ENCODE measurements at regions of chr3 and their contacts with region 1.

Region 1: GRCh38 chr3:122679085-122679881 is 1.4 kb upstream of the PARP14 start:
- DNase-seq: peak; percentile 87
- ATAC-seq: peak; percentile 74 to 83

Region 2: DNA sequence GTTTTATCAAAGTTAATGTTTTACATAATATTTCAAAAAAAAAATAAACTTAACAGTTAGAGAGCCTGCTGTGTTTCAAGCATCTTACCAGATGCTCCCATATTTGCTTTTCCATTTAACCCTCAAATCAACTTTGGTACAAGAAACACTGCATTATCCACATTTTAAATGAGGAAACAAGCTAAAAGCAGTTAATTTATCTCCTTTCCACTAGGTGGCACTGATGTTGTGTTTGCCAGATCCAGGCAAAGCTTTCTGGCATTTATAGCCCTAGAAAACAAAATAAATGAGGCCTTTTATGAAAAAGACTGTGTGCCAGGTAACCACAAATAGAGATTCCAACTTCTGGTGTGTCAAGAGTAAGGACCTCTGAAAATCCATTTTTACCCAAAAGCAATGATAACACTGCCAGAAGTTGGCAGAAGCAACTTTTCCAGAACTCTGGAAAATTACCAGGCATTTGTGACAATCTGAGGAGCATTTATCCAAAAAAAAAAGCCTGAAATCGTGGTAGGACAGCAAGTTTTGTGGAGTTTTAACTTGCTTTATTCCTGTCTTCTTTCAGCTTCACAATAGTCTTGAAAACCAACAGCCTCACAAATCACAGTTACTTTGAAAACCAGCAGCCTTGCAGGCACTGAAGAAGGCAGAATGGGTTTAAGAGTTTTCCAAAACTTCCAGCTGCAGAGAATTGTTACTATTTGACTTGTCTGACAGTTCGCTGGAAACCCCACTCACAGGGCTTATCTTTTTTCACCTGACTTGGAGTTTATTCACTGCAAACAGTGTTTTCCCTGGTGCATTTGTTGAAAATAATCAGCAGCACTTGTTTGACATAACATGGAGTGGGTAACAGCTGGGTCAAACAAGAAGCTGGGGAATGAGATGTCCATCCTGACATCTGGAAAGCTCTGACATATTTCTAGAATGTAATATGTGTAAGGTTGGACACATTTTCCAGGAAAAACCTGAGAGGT is 286.1 kb before region 1 on chr3:
- intact Hi-C with region 1: loop called in 1 of 2 experiments (anchors 5 kb)
- DNase-seq: no peak
- ATAC-seq: peak in 1 of 2 donors; percentile 54

Region 3: DNA sequence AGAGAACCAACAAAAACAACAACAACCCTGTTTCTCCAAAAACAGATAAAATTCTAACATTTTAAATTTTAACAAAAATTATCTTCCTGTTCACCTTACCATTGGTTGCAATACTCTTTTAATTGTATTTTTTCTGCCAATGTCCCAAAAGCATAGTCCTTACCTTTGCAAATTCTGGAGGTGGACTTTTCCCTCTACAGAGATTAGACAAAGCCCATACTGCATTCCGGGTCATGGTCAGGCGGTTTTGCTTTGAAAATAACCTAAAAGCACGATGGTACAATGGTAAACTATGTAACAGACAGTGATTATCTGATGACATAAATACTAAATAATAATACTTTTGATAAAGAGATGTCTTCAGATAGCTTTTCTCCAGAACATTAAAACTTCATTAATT is 227.9 kb before region 1 on chr3:
- intact Hi-C with region 1: no loop called
- DNase-seq: no peak
- ATAC-seq: no peak

Region 4: DNA sequence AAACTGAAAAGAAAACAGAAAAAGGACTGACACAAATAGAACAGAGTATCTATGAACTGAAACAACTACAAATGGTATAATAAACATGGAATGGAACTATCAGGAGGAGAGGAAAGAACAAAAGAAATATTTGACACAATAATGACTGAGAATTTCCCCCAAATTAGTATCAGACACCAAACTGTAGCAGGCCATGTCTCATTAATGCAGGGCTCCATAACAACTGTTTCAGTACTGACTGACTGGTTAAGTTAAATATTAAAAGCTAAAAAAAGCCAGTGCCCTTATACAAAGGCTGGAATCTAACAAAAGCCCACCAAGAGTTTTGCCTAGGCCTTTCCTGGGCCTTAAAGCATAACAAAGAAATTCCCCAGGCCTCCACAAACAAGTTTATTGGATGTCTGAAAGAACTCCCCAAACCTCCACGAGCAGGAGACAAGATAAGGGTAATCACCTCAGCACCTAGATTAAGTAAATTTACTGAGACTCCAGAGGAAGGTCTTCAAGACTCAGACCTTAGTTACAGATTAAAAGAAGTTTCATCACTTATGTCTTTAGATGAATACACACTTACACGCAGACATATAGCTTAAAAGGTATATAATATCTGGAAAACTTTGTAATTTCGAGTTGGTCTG is 210.3 kb before region 1 on chr3:
- intact Hi-C with region 1: loop called in 1 of 2 experiments (anchors 10 kb)
- DNase-seq: no peak
- ATAC-seq: no peak

Region 5: DNA sequence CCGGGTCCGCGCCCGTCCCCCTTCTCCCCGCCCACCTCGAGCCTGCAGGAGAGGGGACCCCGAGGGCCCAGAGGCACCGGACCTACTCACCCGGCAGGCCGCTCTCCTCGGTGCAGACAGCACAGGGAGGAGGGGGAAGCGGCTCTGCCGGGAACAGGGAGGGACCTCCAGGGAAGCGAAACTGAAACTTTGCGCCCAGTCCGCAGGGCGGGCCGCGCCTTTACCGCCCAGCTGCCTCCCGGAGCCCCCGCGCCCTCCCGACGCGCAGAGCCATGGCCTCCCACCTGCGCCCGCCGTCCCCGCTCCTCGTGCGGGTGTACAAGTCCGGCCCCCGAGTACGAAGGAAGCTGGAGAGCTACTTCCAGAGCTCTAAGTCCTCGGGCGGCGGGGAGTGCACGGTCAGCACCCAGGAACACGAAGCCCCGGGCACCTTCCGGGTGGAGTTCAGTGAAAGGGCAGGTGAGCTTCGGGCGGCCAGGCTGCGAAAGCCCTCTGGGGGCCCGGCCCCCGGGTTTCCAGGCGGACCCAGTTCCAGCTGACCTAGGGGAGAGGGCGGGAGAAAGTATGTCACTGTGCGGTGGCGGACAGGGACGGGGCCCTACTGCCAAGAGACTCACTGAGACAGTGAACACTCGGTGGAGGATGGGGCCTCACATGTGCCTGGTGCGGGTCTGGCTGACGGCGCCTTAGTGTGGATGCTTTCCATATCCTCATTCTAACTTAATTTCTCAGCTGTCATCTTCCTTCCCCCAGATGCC is 114.9 kb before region 1 on chr3 and contains the starts of genes DTX3L and PARP9:
- intact Hi-C with region 1: loop called (anchors 2 to 5 kb)
- DNase-seq: peak; percentile 89
- ATAC-seq: peak; percentile 99
- total RNA-seq, gene DTX3L: 13.6 to 25.0 TPM
- total RNA-seq, gene PARP9: 16.8 to 27.0 TPM

Region 6: GRCh38 chr3:122609798-122610559 is 69.3 kb before region 1 on chr3:
- intact Hi-C with region 1: no loop called
- DNase-seq: no peak
- ATAC-seq: peak in 1 of 2 donors; percentile 82

Measured in left cardiac atrium (tissue), 4 donors.